Activated CD4-positive, alpha-beta T cell treated with anti-CD3 and anti-CD28 coated beads for 36 hours (primary cell): ENCODE measurements at regions of chr6 and their contacts with region 1.

Region 1: GRCh38 chr6:73309769-73310502 is 44.1 kb downstream of the DPPA5 start:
- DNase-seq: peak; percentile 79
- ATAC-seq: peak; percentile 90
- H3K4me3 Mint-ChIP-seq: peak overlapping the region; percentile 90
- H3K27ac Mint-ChIP-seq: peak overlapping the region; percentile 88
- H3K4me1 Mint-ChIP-seq: peaks cover 20% of the 10 kb centered on the region
- H3K27me3 Mint-ChIP-seq: peaks cover 28% of the 10 kb centered on the region

Region 2: GRCh38 chr6:73262671-73263569 is 47.0 kb before region 1 on chr6 and contains the start of gene KHDC1:
- CTCF ChIA-PET with region 1: no interaction called
- POLR2A ChIA-PET with region 1: no interaction called
- intact Hi-C with region 1: loop called (anchors 1 to 2 kb)
- DNase-seq: peak; percentile 74
- ATAC-seq: peak; percentile 89
- H3K4me3 Mint-ChIP-seq: peak within 1 kb of the TSS; percentile 89
- H3K27ac Mint-ChIP-seq: peak within 1 kb of the TSS; percentile 93
- H3K4me1 Mint-ChIP-seq: peaks cover 26% of the 10 kb centered on the region
- H3K27me3 Mint-ChIP-seq: no peaks in the 10 kb centered on the region
- total RNA-seq, gene KHDC1: 2.8 to 4.2 TPM

Region 3: GRCh38 chr6:73394577-73395354 is 84.8 kb after region 1 on chr6 and contains the start of gene DDX43:
- CTCF ChIA-PET with region 1: no interaction called
- POLR2A ChIA-PET with region 1: interaction called, 3 read pairs
- intact Hi-C with region 1: loop called (anchors 5 kb)
- DNase-seq: peak; percentile 78
- ATAC-seq: peak; percentile 94
- H3K4me3 Mint-ChIP-seq: peak within 1 kb of the TSS; percentile 76
- H3K27ac Mint-ChIP-seq: peak within 1 kb of the TSS; percentile 92
- H3K4me1 Mint-ChIP-seq: peaks cover 12% of the 10 kb centered on the region
- H3K27me3 Mint-ChIP-seq: no peaks in the 10 kb centered on the region
- total RNA-seq, gene DDX43: 0.51 to 0.66 TPM

Region 4: DNA sequence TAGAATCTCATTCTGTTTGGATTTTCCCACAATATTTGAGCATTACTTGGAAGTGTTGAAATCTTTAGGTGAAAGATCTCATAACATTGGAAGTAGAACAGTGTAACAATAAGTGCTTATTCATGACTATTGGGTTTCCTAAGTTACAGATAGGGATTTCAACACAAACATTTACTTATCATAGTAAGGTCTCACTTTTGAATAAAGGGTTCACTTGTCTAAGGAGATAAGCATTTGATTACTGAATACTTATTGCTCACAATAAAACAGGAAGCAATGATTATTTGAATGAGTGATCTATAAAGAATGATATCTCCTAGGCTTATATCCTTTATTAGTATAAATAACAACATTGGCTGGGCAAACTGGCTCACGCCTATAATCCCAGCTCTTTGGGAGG is 99.5 kb after region 1 on chr6:
- CTCF ChIA-PET with region 1: no interaction called
- POLR2A ChIA-PET with region 1: no interaction called
- intact Hi-C with region 1: no loop called
- DNase-seq: no peak
- ATAC-seq: no peak
- H3K4me3 Mint-ChIP-seq: no peak overlapping the region
- H3K27ac Mint-ChIP-seq: no peak overlapping the region
- H3K4me1 Mint-ChIP-seq: no peaks in the 10 kb centered on the region
- H3K27me3 Mint-ChIP-seq: no peaks in the 10 kb centered on the region

Region 5: DNA sequence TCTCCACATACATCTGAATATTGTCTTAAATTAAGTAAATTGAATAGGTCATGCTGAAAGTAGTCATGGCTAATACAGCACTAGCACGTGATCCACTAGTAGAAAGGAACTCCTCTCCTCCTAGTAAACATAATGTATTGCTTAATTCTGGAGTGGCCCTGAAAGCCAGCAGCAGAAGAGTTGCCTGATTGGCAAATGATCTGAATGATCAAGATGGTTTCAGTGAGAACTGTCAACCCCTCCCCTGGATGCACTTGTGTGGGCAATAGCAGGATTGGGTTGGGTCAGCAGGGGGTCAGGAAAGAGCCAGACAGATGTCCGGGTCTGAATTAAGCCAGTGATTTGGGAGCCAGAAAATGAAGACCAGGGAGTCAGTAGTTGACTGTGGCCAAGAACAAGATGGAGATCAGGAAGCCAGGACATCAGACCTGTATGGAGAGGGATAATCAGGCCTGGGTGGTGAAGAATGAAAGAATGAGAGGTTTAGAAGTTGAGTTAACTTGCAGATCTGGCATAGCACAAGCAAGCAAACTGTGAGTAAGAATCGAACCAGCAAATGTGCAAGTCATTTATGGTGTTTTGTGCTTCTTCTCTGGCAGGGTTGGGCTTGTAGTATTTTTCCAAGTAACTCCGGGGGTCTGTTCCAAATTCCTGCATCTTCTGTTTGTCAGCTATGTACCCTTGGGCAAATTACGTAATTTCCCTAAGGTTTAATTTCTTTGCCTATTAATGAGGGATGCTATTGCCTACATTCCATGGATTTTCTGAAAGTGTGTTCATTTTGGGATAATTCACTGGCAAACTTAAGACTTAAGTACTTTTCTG is 690.9 kb after region 1 on chr6:
- CTCF ChIA-PET with region 1: no interaction called
- POLR2A ChIA-PET with region 1: no interaction called
- intact Hi-C with region 1: no loop called
- DNase-seq: no peak
- ATAC-seq: no peak
- H3K4me3 Mint-ChIP-seq: no peak overlapping the region
- H3K27ac Mint-ChIP-seq: peak overlapping the region; percentile 8
- H3K4me1 Mint-ChIP-seq: no peaks in the 10 kb centered on the region
- H3K27me3 Mint-ChIP-seq: no peaks in the 10 kb centered on the region

Region 6: GRCh38 chr6:74256381-74256780 is 946.4 kb after region 1 on chr6:
- CTCF ChIA-PET with region 1: no interaction called
- POLR2A ChIA-PET with region 1: no interaction called
- intact Hi-C with region 1: no loop called
- DNase-seq: no peak
- ATAC-seq: no peak
- H3K4me3 Mint-ChIP-seq: no peak overlapping the region
- H3K27ac Mint-ChIP-seq: no peak overlapping the region
- H3K4me1 Mint-ChIP-seq: no peaks in the 10 kb centered on the region
- H3K27me3 Mint-ChIP-seq: no peaks in the 10 kb centered on the region